PC-9 (cell line): ENCODE measurements at regions of chr5 and their contacts with region 1.

Region 1: DNA sequence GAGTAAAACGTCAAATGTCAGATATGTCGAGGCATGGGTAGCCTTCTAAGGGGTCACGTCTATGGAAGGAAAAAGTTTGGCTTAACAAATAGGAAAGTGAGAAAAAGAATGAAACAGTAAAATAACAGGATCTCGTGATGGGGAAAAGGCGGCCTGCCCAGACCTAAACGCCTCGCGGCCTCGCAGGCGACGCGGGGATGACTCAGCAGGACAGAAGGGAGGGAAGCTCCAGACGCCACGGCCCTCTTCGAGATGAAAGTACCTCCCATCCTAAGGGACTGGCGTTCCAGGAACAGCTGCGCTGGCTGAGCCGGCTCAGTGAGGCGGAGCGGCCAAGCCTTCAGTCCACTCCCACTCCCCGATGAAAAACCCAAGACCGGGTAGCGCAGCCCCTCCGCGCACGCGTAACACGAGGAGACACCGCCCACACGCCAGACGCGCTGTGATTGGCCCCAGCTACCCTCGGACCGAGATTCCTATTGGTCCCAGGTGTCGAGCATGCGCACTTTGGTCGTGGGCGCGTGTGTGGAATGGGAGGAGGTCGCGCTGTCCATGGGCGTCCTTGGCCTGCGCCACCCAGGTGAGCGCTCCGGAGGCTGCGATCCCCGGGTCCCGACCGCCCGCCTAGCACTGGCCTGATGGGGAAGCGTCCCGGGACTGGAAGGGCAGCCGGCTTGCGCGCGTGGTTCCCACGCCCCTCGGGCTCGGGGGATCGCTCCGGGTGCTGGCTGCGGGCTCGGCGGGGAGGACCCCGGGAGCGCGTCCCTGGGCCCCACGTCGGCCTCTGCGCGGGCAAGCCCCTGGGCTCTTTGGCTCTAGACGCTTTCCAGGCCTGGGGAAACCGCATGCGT is 588.5 kb downstream of the MTRR start:
- DNase-seq: peak; percentile 99 to 100
- H3K4me3 ChIP-seq: peak overlapping the region; percentile 86
- H3K27ac ChIP-seq: peak overlapping the region; percentile 84
- H3K4me1 ChIP-seq: peaks cover 15% of the 10 kb centered on the region
- H3K27me3 ChIP-seq: no peaks in the 10 kb centered on the region
- CTCF ChIP-seq: no peak

Region 2: GRCh38 chr5:7868773-7869473 is 588.5 kb before region 1 on chr5 and contains the starts of genes FASTKD3 and MTRR:
- CTCF ChIA-PET with region 1: no interaction called
- POLR2A ChIA-PET with region 1: no interaction called
- intact Hi-C with region 1: loop called (anchors 1 kb)
- DNase-seq: peak; percentile 90 to 97
- H3K4me3 ChIP-seq: peak within 1 kb of the TSS; percentile 100
- H3K27ac ChIP-seq: peak within 1 kb of the TSS; percentile 48
- H3K4me1 ChIP-seq: peaks cover 15% of the 10 kb centered on the region
- H3K27me3 ChIP-seq: no peaks in the 10 kb centered on the region
- CTCF ChIP-seq: no peak
- total RNA-seq, gene FASTKD3: 17.6 and 20.6 TPM in 2 replicates
- total RNA-seq, gene MTRR: 71.5 and 72.6 TPM in 2 replicates

Region 3: DNA sequence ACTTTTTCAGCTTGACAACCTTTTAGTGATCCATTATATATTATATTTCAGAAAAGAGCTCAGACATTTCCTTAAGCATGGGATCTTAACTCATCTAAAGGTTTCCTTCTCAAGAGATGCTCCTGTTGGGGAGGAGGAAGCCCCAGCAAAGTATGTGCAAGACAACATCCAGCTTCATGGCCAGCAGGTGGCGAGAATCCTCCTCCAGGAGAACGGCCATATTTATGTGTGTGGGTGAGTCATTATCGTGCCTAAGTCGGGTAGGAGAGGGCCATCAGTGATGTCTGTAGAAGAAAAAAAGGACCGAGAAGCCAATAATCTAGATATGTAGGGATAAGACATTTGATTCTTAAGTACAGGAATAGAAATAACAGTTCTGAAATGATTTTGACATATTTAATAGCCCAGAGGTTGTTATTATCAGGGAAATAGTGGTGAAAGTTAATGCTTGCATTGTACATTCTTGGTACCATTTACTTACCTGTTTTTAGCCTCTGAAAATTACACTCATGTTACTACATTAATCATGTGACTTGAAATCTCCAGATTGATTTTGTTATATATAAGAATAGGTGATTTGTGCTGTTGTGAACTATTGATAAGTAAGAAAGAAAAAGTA is 560.3 kb before region 1 on chr5:
- CTCF ChIA-PET with region 1: no interaction called
- POLR2A ChIA-PET with region 1: no interaction called
- intact Hi-C with region 1: loop called (anchors 10 kb)
- DNase-seq: peak in 1 of 2 experiments; percentile 32
- H3K4me3 ChIP-seq: no peak overlapping the region
- H3K27ac ChIP-seq: no peak overlapping the region
- H3K4me1 ChIP-seq: no peaks in the 10 kb centered on the region
- H3K27me3 ChIP-seq: no peaks in the 10 kb centered on the region
- CTCF ChIP-seq: peak; percentile 60

Region 4: GRCh38 chr5:8053270-8053669 is 404.1 kb before region 1 on chr5:
- CTCF ChIA-PET with region 1: no interaction called
- POLR2A ChIA-PET with region 1: no interaction called
- intact Hi-C with region 1: no loop called
- DNase-seq: no peak
- H3K4me3 ChIP-seq: no peak overlapping the region
- H3K27ac ChIP-seq: no peak overlapping the region
- H3K4me1 ChIP-seq: no peaks in the 10 kb centered on the region
- H3K27me3 ChIP-seq: peaks cover 72% of the 10 kb centered on the region
- CTCF ChIP-seq: no peak

Region 5: GRCh38 chr5:8270246-8270645 is 187.2 kb before region 1 on chr5:
- CTCF ChIA-PET with region 1: no interaction called
- POLR2A ChIA-PET with region 1: interaction called, 11 read pairs
- intact Hi-C with region 1: no loop called
- DNase-seq: no peak
- H3K4me3 ChIP-seq: no peak overlapping the region
- H3K27ac ChIP-seq: no peak overlapping the region
- H3K4me1 ChIP-seq: no peaks in the 10 kb centered on the region
- H3K27me3 ChIP-seq: peaks cover 3% of the 10 kb centered on the region; the same call in 1 of the 2 replicates
- CTCF ChIP-seq: no peak